PC-9 (cell line): ENCODE measurements at regions of chr15 and their contacts with region 1.

Region 1: GRCh38 chr15:58227706-58228543 is 89.7 kb downstream of the AQP9 start:
- DNase-seq: peak; percentile 48 to 69
- H3K4me3 ChIP-seq: no peak overlapping the region
- H3K27ac ChIP-seq: peak overlapping the region; percentile 32; the same call in 1 of the 2 replicates
- H3K4me1 ChIP-seq: peaks cover 25% of the 10 kb centered on the region
- H3K27me3 ChIP-seq: no peaks in the 10 kb centered on the region
- CTCF ChIP-seq: peak; percentile 87

Region 2: DNA sequence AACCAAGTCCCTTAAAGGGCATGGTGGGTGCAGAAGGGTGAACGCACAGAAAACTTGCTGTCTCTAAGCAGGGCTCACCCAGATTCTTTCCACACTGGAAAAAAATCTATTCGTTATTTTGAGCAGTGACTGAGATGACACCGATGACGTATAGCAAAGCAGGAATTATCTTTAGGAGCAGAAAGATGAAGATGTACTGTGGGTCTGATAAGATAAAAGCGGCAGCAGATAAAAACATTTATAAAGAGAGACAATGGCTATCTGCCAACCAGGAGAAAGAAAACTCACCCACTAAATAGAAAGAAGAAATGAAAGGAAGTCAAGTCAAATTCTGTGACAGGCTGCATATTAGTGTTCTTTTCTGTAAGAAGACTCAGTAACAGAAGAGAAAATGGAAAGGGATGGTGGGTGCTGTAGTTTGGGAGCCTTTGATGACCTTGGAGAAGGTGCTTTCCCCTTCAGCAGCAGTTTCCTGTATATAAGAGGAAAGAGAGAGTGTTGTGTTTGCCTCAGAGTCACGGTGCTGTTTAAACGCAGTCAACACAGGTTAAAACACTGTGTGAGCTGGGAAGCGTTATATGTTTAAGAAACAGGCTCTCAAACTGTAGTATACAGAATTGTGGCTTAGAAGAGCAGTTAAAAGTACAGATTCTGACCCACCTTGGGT is 21.9 kb after region 1 on chr15:
- CTCF ChIA-PET with region 1: no interaction called
- POLR2A ChIA-PET with region 1: no interaction called
- intact Hi-C with region 1: no loop called
- DNase-seq: no peak
- H3K4me3 ChIP-seq: no peak overlapping the region
- H3K27ac ChIP-seq: no peak overlapping the region
- H3K4me1 ChIP-seq: no peaks in the 10 kb centered on the region; the same call in 1 of the 2 replicates
- H3K27me3 ChIP-seq: no peaks in the 10 kb centered on the region
- CTCF ChIP-seq: no peak

Region 3: DNA sequence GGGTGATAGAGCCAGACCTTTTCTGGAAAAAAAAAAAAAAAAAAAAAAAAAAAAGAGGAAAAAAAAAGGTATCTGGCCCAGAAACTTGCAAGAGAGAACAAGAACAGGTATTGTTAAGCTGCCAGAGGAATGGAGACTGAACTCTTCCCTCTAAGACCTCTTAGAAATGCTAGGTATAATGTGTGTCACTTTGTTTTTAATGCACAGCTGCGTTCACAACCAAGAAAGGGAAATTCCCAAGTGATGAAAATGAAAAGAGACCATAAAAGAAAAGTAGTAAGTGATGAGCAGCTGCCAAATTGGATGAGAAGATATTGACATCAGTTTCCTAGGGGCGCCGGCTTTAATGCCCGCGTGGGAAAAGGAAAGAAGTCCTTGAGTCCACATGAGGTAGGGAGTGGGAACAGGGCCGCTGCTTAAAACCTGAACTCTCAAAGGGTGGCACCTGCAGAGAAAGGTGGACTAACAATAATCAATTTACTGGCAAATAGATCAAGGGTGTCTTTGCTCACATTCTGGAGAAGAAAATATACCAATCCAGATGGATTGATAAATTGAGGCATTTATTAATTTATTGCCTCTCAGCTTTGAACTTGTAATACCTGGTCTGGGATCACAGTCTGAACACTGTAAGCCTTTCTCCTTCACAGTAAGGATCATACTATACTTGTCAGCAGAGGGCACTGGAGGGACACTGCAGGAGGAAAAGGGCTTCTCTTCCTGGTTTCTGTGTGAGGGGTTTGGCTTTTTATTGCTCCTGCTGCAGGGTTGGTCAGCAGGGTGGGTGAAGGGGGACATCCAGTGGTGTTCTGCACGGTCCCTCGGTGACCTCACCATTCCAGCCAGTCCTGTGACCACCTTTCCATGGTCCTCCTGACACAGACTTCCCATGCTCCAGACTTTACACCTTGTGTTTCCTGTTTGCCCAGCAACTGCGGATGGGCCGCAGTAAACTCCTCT is 41.8 kb after region 1 on chr15:
- CTCF ChIA-PET with region 1: interaction called, 3 read pairs
- POLR2A ChIA-PET with region 1: no interaction called
- intact Hi-C with region 1: loop called (anchors 1 kb)
- DNase-seq: peak; percentile 44 to 62
- H3K4me3 ChIP-seq: no peak overlapping the region
- H3K27ac ChIP-seq: peak overlapping the region; percentile 39
- H3K4me1 ChIP-seq: peaks cover 34% of the 10 kb centered on the region
- H3K27me3 ChIP-seq: no peaks in the 10 kb centered on the region
- CTCF ChIP-seq: peak; percentile 74

Region 4: GRCh38 chr15:58396181-58396580 is 168.3 kb after region 1 on chr15:
- CTCF ChIA-PET with region 1: no interaction called
- POLR2A ChIA-PET with region 1: interaction called, 5 read pairs
- intact Hi-C with region 1: loop called (anchors 1 kb)
- DNase-seq: peak; percentile 35 to 90
- H3K4me3 ChIP-seq: no peak overlapping the region
- H3K27ac ChIP-seq: peak overlapping the region; percentile 79
- H3K4me1 ChIP-seq: peaks cover 65% of the 10 kb centered on the region
- H3K27me3 ChIP-seq: no peaks in the 10 kb centered on the region
- CTCF ChIP-seq: no peak

Region 5: DNA sequence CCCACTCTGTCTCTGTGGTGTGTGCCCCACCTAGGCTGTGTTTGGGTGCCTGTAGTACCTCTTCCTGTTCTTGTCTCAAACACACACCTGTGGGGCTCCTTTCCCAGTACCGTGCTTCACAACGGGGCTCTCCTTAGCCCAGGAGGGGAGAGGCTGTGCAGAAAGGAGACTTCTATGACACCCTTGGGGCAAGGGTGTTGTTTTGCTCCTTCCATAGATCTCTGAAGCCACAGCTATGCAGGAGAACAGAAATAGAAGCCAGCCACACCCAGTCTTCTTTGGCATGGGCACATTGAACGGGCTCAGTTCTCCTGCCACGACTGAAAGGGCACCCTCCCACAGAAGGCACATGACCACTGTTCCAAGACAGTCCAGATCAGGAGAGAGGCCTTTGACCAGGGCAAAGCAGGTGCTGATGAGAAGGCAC is 278.2 kb after region 1 on chr15:
- CTCF ChIA-PET with region 1: no interaction called
- POLR2A ChIA-PET with region 1: no interaction called
- intact Hi-C with region 1: loop called (anchors 5 kb)
- DNase-seq: peak; percentile 43 to 75
- H3K4me3 ChIP-seq: no peak overlapping the region
- H3K27ac ChIP-seq: 0 out of 2 replicates have a peak overlapping the region, but pooled peaks have one; percentile 40
- H3K4me1 ChIP-seq: peaks cover 17% of the 10 kb centered on the region
- H3K27me3 ChIP-seq: no peaks in the 10 kb centered on the region
- CTCF ChIP-seq: no peak

Region 6: DNA sequence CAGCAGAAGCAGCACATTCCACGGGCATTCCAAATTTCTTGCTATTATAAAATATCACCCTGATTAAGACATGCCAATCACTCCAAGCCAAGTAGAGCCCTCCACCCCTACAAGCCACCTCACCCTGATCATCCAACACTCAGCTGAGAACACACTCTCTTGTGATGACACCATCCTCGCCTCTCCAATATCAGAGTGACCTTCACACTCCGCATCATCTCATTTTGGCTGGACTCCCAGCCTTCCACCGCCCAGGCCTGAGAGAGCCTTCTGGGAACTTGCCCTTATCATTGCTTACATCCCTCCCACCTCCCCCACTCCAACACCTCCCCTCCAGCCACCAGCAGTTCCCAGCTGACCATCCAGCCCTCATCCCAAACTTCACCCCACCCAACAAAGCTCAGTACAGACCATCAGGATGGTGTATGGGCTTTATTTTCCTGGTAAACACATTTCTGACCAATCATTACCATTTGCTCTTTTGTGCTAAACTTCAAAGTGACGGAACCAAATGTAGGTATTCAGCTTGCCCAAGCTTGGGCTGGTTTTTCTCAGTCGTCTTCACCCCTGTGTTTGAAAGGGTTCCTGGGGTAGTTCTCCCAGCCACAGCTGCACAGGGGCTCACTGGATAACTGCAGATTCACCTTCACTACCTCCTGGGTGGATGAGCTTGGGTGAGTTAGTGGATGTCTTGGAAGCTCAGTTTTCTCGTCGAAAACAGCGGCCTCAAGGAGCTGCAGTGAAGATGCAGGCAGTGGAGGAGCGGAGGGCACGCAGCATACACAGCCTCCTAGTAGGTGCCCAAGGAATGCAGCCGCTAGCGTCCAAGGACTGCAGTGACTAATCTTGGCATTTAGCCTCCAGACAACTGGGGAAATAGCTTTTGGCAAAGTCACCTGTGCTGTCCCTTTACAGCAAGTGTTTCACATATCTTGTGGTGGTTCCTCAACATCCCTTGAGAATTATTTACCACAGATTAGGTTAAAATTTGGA is 319.0 kb after region 1 on chr15:
- CTCF ChIA-PET with region 1: no interaction called
- POLR2A ChIA-PET with region 1: interaction called, 3 read pairs
- intact Hi-C with region 1: loop called (anchors 2 kb)
- DNase-seq: peak; percentile 88 to 97
- H3K4me3 ChIP-seq: peak overlapping the region; percentile 43; the same call in 1 of the 2 replicates
- H3K27ac ChIP-seq: peak overlapping the region; percentile 97
- H3K4me1 ChIP-seq: peaks cover 50% of the 10 kb centered on the region
- H3K27me3 ChIP-seq: no peaks in the 10 kb centered on the region
- CTCF ChIP-seq: no peak

Region 7: GRCh38 chr15:58749532-58750337 is 521.8 kb after region 1 on chr15 and contains the start of gene ADAM10:
- CTCF ChIA-PET with region 1: no interaction called
- POLR2A ChIA-PET with region 1: interaction called, 3 read pairs
- intact Hi-C with region 1: loop called (anchors 5 kb)
- DNase-seq: peak; percentile 89 to 98
- H3K4me3 ChIP-seq: peak within 1 kb of the TSS; percentile 97
- H3K27ac ChIP-seq: peak within 1 kb of the TSS; percentile 79
- H3K4me1 ChIP-seq: peaks cover 20% of the 10 kb centered on the region
- H3K27me3 ChIP-seq: no peaks in the 10 kb centered on the region
- CTCF ChIP-seq: no peak
- total RNA-seq, gene ADAM10: 160 and 239 TPM in 2 replicates

Region 8: DNA sequence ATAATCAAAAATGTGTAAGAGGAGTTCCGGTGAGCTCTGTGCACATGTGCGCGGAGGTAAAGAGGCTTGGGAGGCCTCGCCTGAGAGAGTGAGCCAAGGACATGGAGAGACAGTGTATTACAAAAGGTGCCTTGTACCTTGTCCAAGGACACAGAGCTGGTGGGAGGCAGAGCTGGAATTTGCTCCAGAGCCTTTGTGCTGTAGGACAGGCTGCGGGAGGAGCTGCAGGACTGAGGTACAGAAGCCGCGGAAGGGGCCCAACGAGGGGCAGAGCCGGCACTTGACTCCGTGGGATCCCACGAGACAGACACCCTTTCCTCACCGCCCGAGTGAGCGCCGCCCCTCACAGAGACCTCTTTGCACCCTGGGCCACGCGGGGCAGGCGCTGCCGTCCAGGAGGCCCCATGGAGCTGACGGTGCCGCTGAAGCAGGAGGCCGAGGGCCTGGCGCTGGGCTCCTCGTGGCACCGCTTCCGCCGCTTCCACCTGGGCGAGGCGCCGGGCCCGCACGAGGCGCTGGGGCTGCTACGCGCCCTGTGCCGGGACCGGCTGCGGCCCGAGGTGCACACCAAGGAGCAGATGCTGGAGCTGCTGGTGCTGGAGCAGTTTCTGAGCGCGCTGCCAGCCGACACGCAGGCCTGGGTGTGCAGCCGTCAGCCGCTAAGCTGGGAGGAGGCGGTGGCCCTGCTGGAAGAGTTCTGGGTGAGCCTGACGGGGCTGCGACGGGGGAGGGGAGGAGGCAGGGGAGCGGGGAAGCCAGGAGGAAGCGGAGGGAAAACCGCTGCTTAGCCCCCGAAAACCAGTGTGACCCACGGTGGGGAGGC is 636.9 kb after region 1 on chr15:
- CTCF ChIA-PET with region 1: no interaction called
- POLR2A ChIA-PET with region 1: no interaction called
- intact Hi-C with region 1: loop called (anchors 5 kb)
- DNase-seq: peak; percentile 47 to 54
- H3K4me3 ChIP-seq: peak overlapping the region; percentile 58
- H3K27ac ChIP-seq: peak overlapping the region; percentile 77
- H3K4me1 ChIP-seq: no peaks in the 10 kb centered on the region
- H3K27me3 ChIP-seq: no peaks in the 10 kb centered on the region
- CTCF ChIP-seq: no peak